ENCODE measurements at regions of chr9 and their contacts with region 1.

Region 1: GRCh38 chr9:22008736-22009562 is at the start of gene CDKN2B:
- DNase-seq: peak in 1 of 2 experiments; percentile 97
- H3K4me3 ChIP-seq: peak within 1 kb of the TSS; percentile 44 to 78 (median 70)
- H3K27ac ChIP-seq: no peak within 1 kb of the TSS
- H3K4me1 ChIP-seq: peaks cover 3 to 11% (median 5%) of the 10 kb centered on the region in 4 experiments; a peak in 6 of 7 replicates
- H3K27me3 ChIP-seq: peaks cover 28 to 63% (median 45%) of the 10 kb centered on the region in 4 experiments
- CTCF ChIP-seq: peak; percentile 82 to 88 (median 88)
- EP300 ChIP-seq: no peak
- POLR2A ChIP-seq: peak in 1 of 2 experiments; percentile 61; a peak in 2 of 3 replicates
- RAD21 ChIP-seq: peak; percentile 57 to 67
- total RNA-seq, gene CDKN2B: 0.31 and 0.88 TPM in 2 replicates

Region 2: DNA sequence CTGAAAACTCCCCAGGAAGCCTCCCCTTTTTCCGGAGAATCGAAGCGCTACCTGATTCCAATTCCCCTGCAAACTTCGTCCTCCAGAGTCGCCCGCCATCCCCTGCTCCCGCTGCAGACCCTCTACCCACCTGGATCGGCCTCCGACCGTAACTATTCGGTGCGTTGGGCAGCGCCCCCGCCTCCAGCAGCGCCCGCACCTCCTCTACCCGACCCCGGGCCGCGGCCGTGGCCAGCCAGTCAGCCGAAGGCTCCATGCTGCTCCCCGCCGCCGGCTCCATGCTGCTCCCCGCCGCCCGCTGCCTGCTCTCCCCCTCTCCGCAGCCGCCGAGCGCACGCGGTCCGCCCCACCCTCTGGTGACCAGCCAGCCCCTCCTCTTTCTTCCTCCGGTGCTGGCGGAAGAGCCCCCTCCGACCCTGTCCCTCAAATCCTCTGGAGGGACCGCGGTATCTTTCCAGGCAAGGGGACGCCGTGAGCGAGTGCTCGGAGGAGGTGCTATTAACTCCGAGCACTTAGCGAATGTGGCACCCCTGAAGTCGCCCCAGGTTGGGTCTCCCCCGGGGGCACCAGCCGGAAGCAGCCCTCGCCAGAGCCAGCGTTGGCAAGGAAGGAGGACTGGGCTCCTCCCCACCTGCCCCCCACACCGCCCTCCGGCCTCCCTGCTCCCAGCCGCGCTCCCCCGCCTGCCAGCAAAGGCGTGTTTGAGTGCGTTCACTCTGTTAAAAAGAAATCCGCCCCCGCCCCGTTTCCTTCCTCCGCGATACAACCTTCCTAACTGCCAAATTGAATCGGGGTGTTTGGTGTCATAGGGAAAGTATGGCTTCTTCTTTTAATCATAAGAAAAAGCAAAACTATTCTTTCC is 34.2 kb before region 1 on chr9:
- CTCF ChIA-PET with region 1: interaction called, 57 read pairs
- POLR2A ChIA-PET with region 1: no interaction called
- DNase-seq: peak; percentile 81 to 88
- H3K4me3 ChIP-seq: peak overlapping the region; percentile 29 to 60 (median 42)
- H3K27ac ChIP-seq: no peak overlapping the region
- H3K4me1 ChIP-seq: peaks cover 0 to 16% (median 7%) of the 10 kb centered on the region in 4 experiments; a peak in 6 of 7 replicates
- H3K27me3 ChIP-seq: peaks cover 69 to 97% (median 85%) of the 10 kb centered on the region in 4 experiments
- CTCF ChIP-seq: no peak
- EP300 ChIP-seq: peak in 1 of 2 experiments; percentile 47; a peak in 1 of 3 replicates
- POLR2A ChIP-seq: no peak
- RAD21 ChIP-seq: no peak; a peak in 1 of 4 replicates

Region 3: DNA sequence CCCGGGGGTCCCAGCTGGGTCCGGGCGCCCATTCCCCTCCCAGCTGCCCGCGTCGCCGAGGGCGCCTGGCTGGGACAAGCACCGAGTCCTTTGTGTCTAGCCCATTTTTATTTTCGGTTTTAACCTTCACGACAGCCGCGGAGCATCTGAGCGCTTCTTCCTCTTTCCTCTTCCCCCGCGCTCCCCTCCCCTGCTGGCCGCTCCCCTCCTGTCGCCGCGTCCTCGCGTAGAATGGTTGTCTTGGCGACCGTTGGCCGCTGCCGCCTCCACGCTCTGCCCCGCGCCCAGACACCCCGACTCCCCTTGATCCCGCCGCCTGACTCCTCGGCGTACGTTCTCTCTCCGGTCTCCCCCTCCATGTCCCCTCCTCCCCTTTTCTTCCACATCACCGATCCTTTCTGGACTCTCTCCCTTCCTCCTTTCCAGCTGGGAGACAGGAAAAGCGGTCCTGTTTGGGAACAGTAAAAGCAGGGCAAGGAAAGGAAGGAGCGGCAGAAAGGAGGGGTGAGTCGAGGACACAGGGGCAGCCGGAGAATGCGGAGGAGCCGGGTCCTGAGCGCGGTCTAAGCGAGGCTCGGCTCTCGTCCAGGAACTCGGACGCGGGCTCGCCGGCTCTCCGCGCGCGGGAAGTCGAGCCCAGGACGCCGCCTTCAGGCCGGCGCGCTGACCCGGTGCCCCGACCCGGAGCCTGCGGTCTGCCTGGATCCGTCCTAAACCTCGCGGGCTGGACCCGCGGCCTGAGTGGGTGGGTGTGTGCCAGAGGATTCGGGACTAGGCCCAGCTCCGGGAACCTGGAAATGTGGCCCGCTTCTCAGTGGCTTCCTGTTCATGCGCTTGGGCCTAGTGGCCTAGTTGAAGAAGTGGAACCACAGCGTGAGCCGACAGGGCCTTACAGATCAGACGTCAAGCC is 13.5 kb before region 1 on chr9:
- CTCF ChIA-PET with region 1: interaction called, 46 read pairs
- POLR2A ChIA-PET with region 1: interaction called, 10 read pairs
- DNase-seq: peak in 1 of 2 experiments; percentile 86
- H3K4me3 ChIP-seq: peak overlapping the region; percentile 47 to 80 (median 75)
- H3K27ac ChIP-seq: no peak overlapping the region
- H3K4me1 ChIP-seq: peaks cover 4 to 26% (median 10%) of the 10 kb centered on the region in 4 experiments; a peak in 6 of 7 replicates
- H3K27me3 ChIP-seq: peaks cover 25 to 70% (median 54%) of the 10 kb centered on the region in 4 experiments
- CTCF ChIP-seq: no peak
- EP300 ChIP-seq: no peak
- POLR2A ChIP-seq: no peak
- RAD21 ChIP-seq: no peak

Region 4: GRCh38 chr9:22030101-22030598 is 21.2 kb after region 1 on chr9:
- CTCF ChIA-PET with region 1: interaction called, 13 read pairs
- POLR2A ChIA-PET with region 1: interaction called, 4 read pairs
- DNase-seq: no peak
- H3K4me3 ChIP-seq: no peak overlapping the region
- H3K27ac ChIP-seq: no peak overlapping the region
- H3K4me1 ChIP-seq: no peaks in the 10 kb centered on the region
- H3K27me3 ChIP-seq: no peaks in the 10 kb centered on the region
- CTCF ChIP-seq: no peak
- EP300 ChIP-seq: no peak
- POLR2A ChIP-seq: no peak
- RAD21 ChIP-seq: no peak

Region 5: GRCh38 chr9:22079873-22080341 is 71.0 kb after region 1 on chr9:
- CTCF ChIA-PET with region 1: no interaction called
- POLR2A ChIA-PET with region 1: no interaction called
- DNase-seq: no peak
- H3K4me3 ChIP-seq: no peak overlapping the region
- H3K27ac ChIP-seq: no peak overlapping the region
- H3K4me1 ChIP-seq: peaks cover 0 to 6% (median 0%) of the 10 kb centered on the region in 4 experiments; a peak in 2 of 7 replicates
- H3K27me3 ChIP-seq: no peaks in the 10 kb centered on the region
- CTCF ChIP-seq: no peak
- EP300 ChIP-seq: no peak
- POLR2A ChIP-seq: no peak
- RAD21 ChIP-seq: no peak

Measured in H1 (cell line).